Activated B cell treated with CpG ODN at 0.5 μM for 24 hours (primary cell): ENCODE measurements at regions of chr1 and their contacts with region 1.

Region 1: GRCh38 chr1:221777431-221778072 is 35.7 kb upstream of the DUSP10 start:
- DNase-seq: no peak
- ATAC-seq: peak; percentile 65
- H3K4me3 Mint-ChIP-seq: peak overlapping the region; percentile 75
- H3K27ac Mint-ChIP-seq: peak overlapping the region; percentile 95
- H3K4me1 Mint-ChIP-seq: peaks cover 78% of the 10 kb centered on the region
- H3K27me3 Mint-ChIP-seq: no peaks in the 10 kb centered on the region
- CTCF ChIP-seq: peak; percentile 34

Region 2: DNA sequence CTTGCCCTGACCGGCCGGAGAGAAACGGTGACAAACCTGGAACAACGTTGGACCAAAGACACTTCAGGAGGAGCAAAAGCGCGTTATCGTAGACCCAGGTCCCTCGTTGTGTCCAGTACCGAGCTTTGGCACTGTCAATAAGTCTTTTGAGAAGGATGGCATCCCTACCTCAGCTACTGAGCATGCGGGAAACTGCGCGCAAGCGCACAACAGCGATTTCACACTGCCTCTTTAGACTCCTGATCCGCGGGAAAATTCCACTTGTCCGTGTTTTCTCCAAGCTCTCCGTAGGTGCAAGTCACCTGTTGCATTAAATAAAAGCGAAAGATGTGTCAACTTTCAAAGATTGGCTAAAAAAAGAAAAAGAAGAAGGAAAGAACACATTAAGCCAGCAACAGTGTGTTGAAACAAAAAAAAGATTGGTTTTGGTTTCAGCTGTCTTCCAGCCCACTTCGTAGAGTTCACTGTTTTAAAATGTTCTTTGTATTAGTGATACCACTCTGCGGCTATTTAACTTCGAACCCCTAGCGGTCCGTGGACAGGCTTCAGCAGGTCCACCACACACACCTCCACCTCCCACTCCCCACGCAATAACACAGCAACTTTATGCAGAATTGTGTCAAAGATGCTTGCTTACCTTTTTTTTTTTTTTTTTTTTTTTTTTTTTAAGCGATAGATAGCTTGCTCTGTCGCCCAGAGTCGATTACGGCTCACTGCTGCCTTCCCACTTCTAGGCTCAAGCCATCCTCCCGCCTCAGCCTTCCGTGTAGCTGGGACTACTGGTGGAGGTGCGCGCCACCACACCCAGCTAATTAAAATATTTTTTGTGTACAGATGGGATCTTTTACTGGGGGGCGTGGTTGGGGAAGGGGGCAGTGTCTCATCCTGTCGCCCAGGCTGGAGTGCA is 1687.6 kb before region 1 on chr1 and contains the start of gene BPNT1:
- CTCF ChIA-PET with region 1: no interaction called
- POLR2A ChIA-PET with region 1: no interaction called
- intact Hi-C with region 1: loop called (anchors 5 kb)
- DNase-seq: peak; percentile 88
- ATAC-seq: peak; percentile 69
- H3K4me3 Mint-ChIP-seq: peak within 1 kb of the TSS; percentile 95
- H3K27ac Mint-ChIP-seq: peak within 1 kb of the TSS; percentile 96
- H3K4me1 Mint-ChIP-seq: peaks cover 34% of the 10 kb centered on the region
- H3K27me3 Mint-ChIP-seq: no peaks in the 10 kb centered on the region
- CTCF ChIP-seq: no peak
- total RNA-seq, gene BPNT1: 22.8 and 23.6 TPM in 2 replicates

Region 3: GRCh38 chr1:221435504-221435904 is 342.0 kb before region 1 on chr1:
- CTCF ChIA-PET with region 1: no interaction called
- POLR2A ChIA-PET with region 1: interaction called, 3 read pairs
- intact Hi-C with region 1: loop called (anchors 1 kb)
- DNase-seq: no peak
- ATAC-seq: peak; percentile 27
- H3K4me3 Mint-ChIP-seq: no peak overlapping the region
- H3K27ac Mint-ChIP-seq: no peak overlapping the region
- H3K4me1 Mint-ChIP-seq: peaks cover 26% of the 10 kb centered on the region
- H3K27me3 Mint-ChIP-seq: peaks cover 4% of the 10 kb centered on the region
- CTCF ChIP-seq: peak; percentile 29

Region 4: GRCh38 chr1:221708987-221709386 is 68.6 kb before region 1 on chr1:
- CTCF ChIA-PET with region 1: no interaction called
- POLR2A ChIA-PET with region 1: interaction called, 7 read pairs
- intact Hi-C with region 1: loop called (anchors 1 kb)
- DNase-seq: peak; percentile 20
- ATAC-seq: peak; percentile 32
- H3K4me3 Mint-ChIP-seq: peak overlapping the region; percentile 37
- H3K27ac Mint-ChIP-seq: peak overlapping the region; percentile 82
- H3K4me1 Mint-ChIP-seq: peaks cover 60% of the 10 kb centered on the region
- H3K27me3 Mint-ChIP-seq: no peaks in the 10 kb centered on the region
- CTCF ChIP-seq: no peak

Region 5: DNA sequence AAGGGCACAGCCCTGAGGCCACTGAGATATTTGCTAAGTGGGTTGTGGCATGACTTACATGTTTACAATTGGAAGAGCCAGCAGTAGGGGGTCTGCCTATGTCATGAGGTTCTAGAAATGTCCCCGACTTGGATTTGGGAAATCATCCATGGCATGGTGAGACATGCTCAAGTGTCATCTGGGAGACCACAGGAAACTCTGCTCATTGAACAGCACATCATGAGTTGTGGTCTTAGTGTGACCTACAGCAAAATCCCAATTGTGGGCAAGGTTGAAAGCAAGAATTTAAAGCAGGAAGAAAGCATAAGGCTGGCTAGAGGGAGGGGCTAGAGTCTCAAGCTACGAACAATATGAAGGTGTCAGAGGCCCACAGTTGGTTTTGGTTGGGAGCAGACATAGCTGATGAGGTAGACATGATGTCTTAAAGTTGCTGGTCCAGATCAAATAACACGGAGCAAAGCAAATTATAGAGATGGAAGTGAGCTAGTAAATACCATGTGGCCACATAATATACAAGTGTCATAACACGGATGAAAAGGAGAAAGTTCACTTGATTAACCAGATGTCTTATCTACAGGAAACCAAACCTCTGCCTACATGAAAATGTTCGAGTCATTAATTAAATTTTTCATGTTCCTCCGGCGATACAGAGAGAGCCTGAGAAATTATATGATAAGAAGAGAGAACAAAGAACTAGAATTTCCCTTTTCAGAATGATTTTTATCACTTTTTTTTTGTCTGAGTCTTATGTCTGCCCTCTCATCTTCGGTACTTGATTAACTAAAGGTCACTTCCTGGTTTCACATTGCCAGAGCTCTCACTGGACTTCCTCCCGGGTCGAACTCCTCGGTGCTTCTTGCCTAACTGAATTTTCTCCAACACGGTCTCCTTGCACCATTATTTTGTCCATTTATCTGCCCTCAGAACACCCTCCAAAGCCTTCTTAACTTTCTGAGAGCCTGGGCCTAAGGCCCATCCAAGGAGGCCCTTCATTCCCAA is 31.8 kb after region 1 on chr1:
- CTCF ChIA-PET with region 1: no interaction called
- POLR2A ChIA-PET with region 1: interaction called, 27 read pairs
- intact Hi-C with region 1: loop called (anchors 1 kb)
- DNase-seq: no peak
- ATAC-seq: peak; percentile 73
- H3K4me3 Mint-ChIP-seq: peak overlapping the region; percentile 52
- H3K27ac Mint-ChIP-seq: peak overlapping the region; percentile 91
- H3K4me1 Mint-ChIP-seq: peaks cover 72% of the 10 kb centered on the region
- H3K27me3 Mint-ChIP-seq: no peaks in the 10 kb centered on the region
- CTCF ChIP-seq: no peak

Region 6: DNA sequence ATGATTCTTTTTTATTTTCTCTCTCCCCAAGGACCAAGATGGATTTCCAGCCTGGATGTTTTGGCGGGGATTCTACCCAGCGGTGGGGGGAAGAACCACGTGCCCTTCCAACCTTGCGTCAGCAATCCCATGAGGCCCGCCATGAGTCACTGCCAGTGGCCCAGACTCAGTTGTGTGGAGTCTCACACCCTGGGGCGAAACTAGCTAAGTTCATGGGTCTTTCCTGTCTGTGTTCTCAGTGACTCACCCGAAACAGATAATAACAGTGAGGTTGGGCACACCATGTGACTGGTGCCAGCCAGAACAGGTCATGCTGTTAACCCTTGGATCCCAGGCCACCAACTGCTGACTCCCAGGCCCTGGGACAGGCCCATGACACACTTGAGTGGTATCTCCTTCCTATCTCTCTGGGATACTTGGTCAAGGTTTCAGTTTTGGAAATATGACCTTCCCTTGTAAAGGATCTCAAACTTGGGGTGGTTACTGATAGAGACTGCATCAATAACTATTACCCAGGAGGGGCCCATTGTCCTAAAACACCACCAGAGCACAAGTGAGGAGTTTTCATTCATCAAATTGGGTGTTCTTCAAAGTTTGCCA is 62.3 kb after region 1 on chr1:
- CTCF ChIA-PET with region 1: interaction called, 8 read pairs
- POLR2A ChIA-PET with region 1: interaction called, 114 read pairs
- intact Hi-C with region 1: loop called (anchors 1 kb)
- DNase-seq: peak; percentile 80
- ATAC-seq: peak; percentile 80
- H3K4me3 Mint-ChIP-seq: peak overlapping the region; percentile 29
- H3K27ac Mint-ChIP-seq: peak overlapping the region; percentile 95
- H3K4me1 Mint-ChIP-seq: peaks cover 50% of the 10 kb centered on the region
- H3K27me3 Mint-ChIP-seq: no peaks in the 10 kb centered on the region
- CTCF ChIP-seq: no peak

Region 7: GRCh38 chr1:221897321-221897721 is 119.8 kb after region 1 on chr1:
- CTCF ChIA-PET with region 1: no interaction called
- POLR2A ChIA-PET with region 1: no interaction called
- intact Hi-C with region 1: no loop called
- DNase-seq: no peak
- ATAC-seq: no peak
- H3K4me3 Mint-ChIP-seq: no peak overlapping the region
- H3K27ac Mint-ChIP-seq: no peak overlapping the region
- H3K4me1 Mint-ChIP-seq: no peaks in the 10 kb centered on the region
- H3K27me3 Mint-ChIP-seq: no peaks in the 10 kb centered on the region
- CTCF ChIP-seq: no peak

Region 8: GRCh38 chr1:222009105-222009730 is 231.7 kb after region 1 on chr1:
- CTCF ChIA-PET with region 1: interaction called, 4 read pairs
- POLR2A ChIA-PET with region 1: no interaction called
- intact Hi-C with region 1: loop called (anchors 1 kb)
- DNase-seq: no peak
- ATAC-seq: peak; percentile 77
- H3K4me3 Mint-ChIP-seq: no peak overlapping the region
- H3K27ac Mint-ChIP-seq: no peak overlapping the region
- H3K4me1 Mint-ChIP-seq: peaks cover 2% of the 10 kb centered on the region
- H3K27me3 Mint-ChIP-seq: no peaks in the 10 kb centered on the region
- CTCF ChIP-seq: no peak